ENCODE measurements at regions of chr2 and their contacts with region 1.

Region 1: DNA sequence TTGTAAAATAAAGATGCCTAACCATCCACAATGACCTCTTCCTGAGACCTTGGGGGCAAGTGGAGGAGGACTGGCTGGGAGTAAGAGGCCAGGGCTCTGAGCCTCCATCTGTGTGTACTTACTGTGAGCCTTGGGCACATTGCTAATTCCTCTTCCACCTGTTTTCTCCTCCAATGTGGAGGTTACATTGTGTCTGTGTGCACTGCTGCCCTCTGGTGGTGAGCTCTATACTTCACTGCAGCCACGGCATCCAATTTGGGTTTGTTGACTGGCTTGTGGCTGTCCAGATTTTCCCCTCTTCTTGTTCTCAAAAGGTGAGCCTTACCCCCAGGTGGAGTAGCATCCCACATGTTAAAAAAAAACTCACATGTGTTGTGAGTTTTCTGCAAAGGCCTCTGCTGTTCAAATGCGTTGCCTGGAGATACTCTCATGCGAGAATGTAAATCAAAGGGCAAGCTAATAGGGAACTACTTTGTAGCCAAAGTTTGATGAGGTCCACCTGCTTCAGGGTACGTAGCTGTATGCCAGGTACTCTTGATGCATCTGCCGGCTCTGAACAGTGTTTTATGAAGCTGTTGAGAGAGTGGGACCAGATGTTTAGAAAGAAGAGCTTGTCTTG is 80.8 kb downstream of the APOB start:
- H3K4me3 Mint-ChIP-seq: no peak overlapping the region
- H3K27ac Mint-ChIP-seq: no peak overlapping the region
- H3K4me1 Mint-ChIP-seq: no peaks in the 10 kb centered on the region
- H3K27me3 Mint-ChIP-seq: peaks cover 17% of the 10 kb centered on the region

Region 2: DNA sequence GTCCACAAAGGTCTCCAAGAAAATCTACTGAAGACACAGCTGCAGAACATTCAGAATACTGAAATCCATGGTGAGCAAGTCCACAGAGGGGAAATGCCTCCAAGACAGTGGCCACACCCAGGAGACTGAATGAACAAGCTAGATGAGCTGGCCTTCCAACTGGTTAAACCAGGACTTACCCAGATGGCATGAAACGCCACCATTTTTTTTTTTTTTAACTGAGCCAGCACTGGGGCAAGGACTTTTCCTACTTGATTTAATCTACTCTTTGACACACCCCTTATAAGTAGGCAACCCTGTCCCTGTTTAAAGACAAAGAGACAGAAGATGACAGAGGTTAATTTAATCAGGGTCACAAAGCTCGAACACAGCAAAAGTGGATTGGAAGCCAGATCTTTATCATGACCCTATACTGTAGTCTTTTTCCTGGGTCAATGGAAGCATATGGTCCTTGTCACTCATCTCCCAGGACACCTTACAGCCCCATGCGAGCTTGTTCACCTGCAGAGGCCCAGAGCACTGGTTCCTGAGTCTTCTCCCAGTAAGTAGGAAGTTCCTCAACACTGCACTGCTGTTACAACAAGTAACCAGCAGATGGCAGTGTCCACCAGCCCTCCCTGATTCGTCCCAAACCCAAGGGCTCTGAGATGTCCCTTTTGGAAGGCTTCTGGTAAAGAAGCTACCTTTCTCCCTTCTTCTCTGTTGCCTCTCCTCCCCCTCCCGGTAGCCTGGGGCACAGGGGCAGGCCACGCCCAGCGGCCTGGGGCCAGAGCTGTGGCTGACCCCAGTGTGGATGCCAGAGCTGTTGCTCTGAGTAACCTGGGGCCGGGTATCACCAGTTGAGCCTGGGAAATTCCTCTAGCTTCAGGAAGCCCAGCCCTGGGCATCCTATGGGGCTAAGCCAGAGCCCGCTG is 301.7 kb before region 1 on chr2:
- intact Hi-C with region 1: loop called (anchors 1 kb)
- H3K4me3 Mint-ChIP-seq: no peak overlapping the region
- H3K27ac Mint-ChIP-seq: peak overlapping the region; percentile 52
- H3K4me1 Mint-ChIP-seq: peaks cover 31% of the 10 kb centered on the region
- H3K27me3 Mint-ChIP-seq: peaks cover 73% of the 10 kb centered on the region

Region 3: GRCh38 chr2:20682167-20682920 is 280.7 kb before region 1 on chr2:
- intact Hi-C with region 1: loop called (anchors 5 kb)
- H3K4me3 Mint-ChIP-seq: no peak overlapping the region
- H3K27ac Mint-ChIP-seq: no peak overlapping the region
- H3K4me1 Mint-ChIP-seq: no peaks in the 10 kb centered on the region
- H3K27me3 Mint-ChIP-seq: no peaks in the 10 kb centered on the region

Region 4: DNA sequence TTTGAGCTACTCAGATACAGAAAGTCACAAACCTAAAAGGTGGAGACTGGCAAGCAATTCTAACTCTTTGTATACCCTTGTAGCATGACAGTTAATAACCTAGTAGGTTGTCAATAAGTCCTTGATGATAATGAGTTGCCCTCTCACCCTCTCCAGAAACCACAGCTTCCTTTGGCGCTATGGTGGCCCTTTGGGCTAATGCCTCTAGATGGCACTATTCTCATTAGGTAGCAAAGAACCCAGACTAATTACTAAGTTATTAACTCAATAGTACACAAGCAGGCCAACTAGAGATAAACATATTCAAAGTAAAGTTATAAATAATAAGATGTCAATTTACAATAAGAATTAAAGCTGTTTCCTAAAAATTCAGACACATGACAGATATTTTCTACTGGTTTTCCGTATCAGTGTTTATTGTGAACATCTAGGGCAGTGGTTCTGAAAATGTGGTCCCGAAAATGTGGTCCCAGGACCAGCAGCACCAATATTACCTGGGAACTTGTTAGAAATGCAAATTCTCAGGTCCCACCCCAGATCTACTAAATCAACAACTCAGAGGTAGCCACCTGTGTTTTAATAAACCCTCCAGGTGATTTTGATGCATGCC is 181.3 kb before region 1 on chr2:
- intact Hi-C with region 1: loop called (anchors 1 kb)
- H3K4me3 Mint-ChIP-seq: no peak overlapping the region
- H3K27ac Mint-ChIP-seq: no peak overlapping the region
- H3K4me1 Mint-ChIP-seq: no peaks in the 10 kb centered on the region
- H3K27me3 Mint-ChIP-seq: no peaks in the 10 kb centered on the region

Region 5: DNA sequence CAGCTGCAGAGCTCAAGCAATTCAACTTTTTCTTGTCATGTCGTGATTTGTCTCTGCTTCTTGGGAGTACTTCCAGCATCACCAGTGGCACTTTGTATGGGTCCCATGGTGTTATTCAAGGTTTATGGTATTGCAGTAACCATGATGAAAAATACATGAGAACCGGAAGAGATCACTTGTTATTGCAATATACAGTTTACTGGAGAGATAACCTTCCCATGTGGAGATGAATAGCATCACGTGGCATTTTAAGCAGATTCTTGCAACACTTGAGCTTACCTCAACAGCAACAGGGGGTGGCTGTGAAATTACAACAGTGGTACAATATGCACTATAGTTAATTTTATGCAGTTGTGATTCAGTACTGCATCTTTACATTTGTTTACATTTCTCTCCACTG is 16.6 kb before region 1 on chr2:
- intact Hi-C with region 1: no loop called
- H3K4me3 Mint-ChIP-seq: no peak overlapping the region
- H3K27ac Mint-ChIP-seq: no peak overlapping the region
- H3K4me1 Mint-ChIP-seq: no peaks in the 10 kb centered on the region
- H3K27me3 Mint-ChIP-seq: peaks cover 3% of the 10 kb centered on the region

Measured in dendritic cell treated with granulocyte-macrophage colony-stimulating factor and Interleukin-4, amounts not matched to agents 40 ng/mL and 50 ng/mL, for 4 days (primary cell).